ENCODE measurements at regions of chr5 and their contacts with region 1.

Region 1: GRCh38 chr5:91499943-91500531 is 116.9 kb upstream of the ARRDC3 start:
- DNase-seq: peak; percentile 42 to 54
- ATAC-seq: peak; percentile 72 to 84; a peak in 3 of 6 replicates
- H3K4me3 ChIP-seq: no peak overlapping the region
- H3K27ac ChIP-seq: no peak overlapping the region
- H3K4me1 ChIP-seq: no peaks in the 10 kb centered on the region
- CTCF ChIP-seq: peak; percentile 86
- EP300 ChIP-seq: no peak
- POLR2A ChIP-seq: no peak
- RAD21 ChIP-seq: peak; percentile 83 to 86

Region 2: GRCh38 chr5:91486638-91487037 is 13.4 kb before region 1 on chr5:
- CTCF ChIA-PET with region 1: interaction called, 23 read pairs
- POLR2A ChIA-PET with region 1: no interaction called
- DNase-seq: peak; percentile 12 to 36
- ATAC-seq: peak; percentile 71 to 83
- H3K4me3 ChIP-seq: no peak overlapping the region
- H3K27ac ChIP-seq: peak overlapping the region in 1 of 2 experiments; percentile 45; a peak in 1 of 6 replicates
- H3K4me1 ChIP-seq: peaks cover 26% of the 10 kb centered on the region
- CTCF ChIP-seq: no peak
- EP300 ChIP-seq: no peak
- POLR2A ChIP-seq: no peak
- RAD21 ChIP-seq: no peak

Region 3: DNA sequence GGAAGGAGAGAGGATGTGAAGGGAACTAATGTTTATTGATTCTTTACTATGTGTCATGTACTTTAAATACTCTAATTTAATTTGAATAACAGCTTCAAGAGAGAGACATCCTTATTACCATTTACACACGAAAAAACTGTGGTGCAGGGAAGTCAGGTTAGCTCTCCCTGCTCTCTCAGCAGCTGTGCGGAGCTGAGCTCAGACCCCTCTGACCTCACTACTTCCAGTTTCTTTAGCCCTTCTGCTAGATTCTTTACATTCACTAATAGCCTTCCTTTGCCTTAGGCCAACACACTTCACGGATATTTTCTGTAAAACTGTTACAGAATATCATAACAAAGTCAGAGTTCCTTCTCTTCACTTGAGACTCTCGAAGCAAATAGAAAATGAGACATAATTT is 14.4 kb after region 1 on chr5:
- CTCF ChIA-PET with region 1: interaction called, 15 read pairs
- POLR2A ChIA-PET with region 1: no interaction called
- DNase-seq: no peak
- ATAC-seq: no peak
- H3K4me3 ChIP-seq: no peak overlapping the region
- H3K27ac ChIP-seq: no peak overlapping the region
- H3K4me1 ChIP-seq: no peaks in the 10 kb centered on the region
- CTCF ChIP-seq: no peak
- EP300 ChIP-seq: no peak
- POLR2A ChIP-seq: no peak
- RAD21 ChIP-seq: no peak

Region 4: DNA sequence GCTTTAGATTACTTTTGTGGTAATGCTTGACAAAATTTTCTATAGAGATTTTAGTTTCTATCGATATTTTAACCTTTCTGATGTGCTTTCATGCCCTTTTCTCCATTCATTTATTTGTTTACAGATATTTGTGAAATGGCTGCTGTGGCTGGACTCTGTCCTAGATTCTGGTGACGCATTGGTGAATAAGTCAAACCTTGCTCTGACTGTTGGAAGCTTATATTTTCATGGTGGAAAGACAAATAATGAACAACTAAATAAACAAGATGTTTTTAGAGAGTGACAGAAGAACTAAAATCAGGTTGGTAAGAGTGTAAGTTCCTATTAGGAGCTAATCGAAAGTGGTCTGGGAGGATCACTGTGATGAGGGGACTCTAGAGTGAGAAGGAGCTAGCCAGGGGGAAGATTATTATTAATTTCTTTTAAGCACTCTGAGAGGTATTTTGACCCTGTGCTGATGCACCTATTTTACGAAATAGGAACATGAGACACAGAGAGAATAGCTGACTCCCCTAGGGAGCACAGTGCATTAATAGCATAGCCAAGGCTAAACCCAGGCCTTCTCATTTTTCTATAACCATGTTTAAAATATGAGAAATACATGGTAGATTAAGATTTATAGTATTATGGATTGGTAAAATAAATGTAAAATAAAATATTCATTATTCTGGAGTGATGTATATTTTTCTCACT is 295.0 kb after region 1 on chr5:
- CTCF ChIA-PET with region 1: no interaction called
- POLR2A ChIA-PET with region 1: no interaction called
- DNase-seq: peak; percentile 8 to 70
- ATAC-seq: peak; percentile 89 to 94
- H3K4me3 ChIP-seq: peak overlapping the region; percentile 2; the same call in 1 of the 3 replicates
- H3K27ac ChIP-seq: peak overlapping the region; percentile 51 to 68
- H3K4me1 ChIP-seq: peaks cover 38% of the 10 kb centered on the region
- CTCF ChIP-seq: no peak
- EP300 ChIP-seq: no peak
- POLR2A ChIP-seq: no peak
- RAD21 ChIP-seq: peak in 1 of 2 experiments; percentile 25; a peak in 1 of 5 replicates